MCF 10A (cell line): ENCODE measurements at regions of chr9 and their contacts with region 1.

Region 1: DNA sequence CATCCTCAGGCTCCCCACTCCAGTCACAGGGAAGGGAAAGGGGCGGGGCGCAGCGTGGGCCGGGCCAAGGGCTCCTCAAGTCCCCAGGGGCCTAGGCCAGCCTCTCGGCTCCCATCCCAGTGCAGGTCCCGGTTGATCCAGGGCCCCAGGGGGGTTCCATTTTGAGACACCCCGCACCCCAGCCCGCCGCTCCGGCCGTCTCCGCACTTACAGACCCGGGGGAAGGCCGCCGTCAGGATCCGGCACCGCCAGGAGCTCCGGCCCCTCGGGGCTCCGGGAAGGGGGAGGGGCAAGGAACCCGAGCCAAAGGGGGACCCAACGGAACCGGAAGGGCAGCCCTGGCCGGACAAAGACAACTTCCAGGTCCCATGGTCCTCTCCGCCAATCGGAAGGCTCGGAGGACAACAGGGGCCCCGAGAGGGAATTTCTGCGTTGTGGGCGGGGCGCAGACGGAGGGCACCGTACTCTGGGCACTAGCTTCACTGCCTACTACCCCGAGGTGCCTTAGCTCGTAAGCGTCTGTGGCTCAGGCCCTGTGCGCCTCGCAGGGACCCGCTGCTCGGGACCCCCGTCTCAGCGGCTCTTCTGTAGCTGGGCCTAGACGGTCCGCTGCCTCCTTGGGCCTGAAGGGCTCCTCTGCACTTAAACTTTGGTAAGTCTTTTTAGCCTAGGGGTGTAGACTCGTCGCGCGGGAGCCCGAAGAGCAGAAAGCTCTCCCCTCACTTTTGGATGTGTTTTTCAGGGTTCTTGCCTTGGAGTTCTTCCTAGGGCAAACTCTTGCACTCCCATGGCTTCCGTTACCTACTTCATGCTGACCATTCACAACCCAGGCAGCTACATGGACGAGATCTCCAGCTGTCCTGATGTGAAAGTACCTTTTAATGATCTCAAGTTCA is at the start of gene ZBTB26:
- DNase-seq: peak; percentile 97
- H3K4me3 Mint-ChIP-seq: no peak within 1 kb of the TSS
- H3K27ac Mint-ChIP-seq: no peak within 1 kb of the TSS
- H3K4me1 Mint-ChIP-seq: peaks cover 5% of the 10 kb centered on the region
- H3K27me3 Mint-ChIP-seq: no peaks in the 10 kb centered on the region
- CTCF ChIP-seq: no peak
- total RNA-seq, gene ZBTB26: 4.0 and 5.7 TPM in 2 replicates

Region 2: GRCh38 chr9:122827761-122828093 is 103.7 kb before region 1 on chr9:
- CTCF ChIA-PET with region 1: no interaction called
- POLR2A ChIA-PET with region 1: interaction called, 10 read pairs
- intact Hi-C with region 1: no loop called
- DNase-seq: no peak
- H3K4me3 Mint-ChIP-seq: peak overlapping the region; percentile 83
- H3K27ac Mint-ChIP-seq: peak overlapping the region; percentile 81
- H3K4me1 Mint-ChIP-seq: peaks cover 10% of the 10 kb centered on the region
- H3K27me3 Mint-ChIP-seq: no peaks in the 10 kb centered on the region
- CTCF ChIP-seq: no peak

Region 3: DNA sequence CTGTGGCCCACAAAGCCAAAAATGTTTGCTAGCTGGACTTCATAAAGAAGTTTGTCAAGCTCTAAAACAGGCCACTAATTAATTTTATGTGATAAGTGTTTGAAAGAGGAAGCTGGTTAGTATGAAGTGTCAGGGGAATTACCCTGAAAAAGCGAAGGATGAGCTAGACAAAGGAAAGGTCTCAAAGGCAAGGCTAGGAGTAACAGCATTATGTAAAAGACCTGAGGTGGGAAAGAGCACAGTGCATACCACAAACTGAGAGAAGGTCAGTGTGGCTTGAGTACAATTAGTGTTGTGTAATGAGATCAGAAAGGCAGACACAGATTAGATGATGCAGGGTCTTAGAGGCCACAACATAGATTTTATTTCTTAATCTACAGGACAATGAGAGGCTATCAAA is 56.0 kb before region 1 on chr9:
- CTCF ChIA-PET with region 1: no interaction called
- POLR2A ChIA-PET with region 1: no interaction called
- intact Hi-C with region 1: no loop called
- DNase-seq: no peak
- H3K4me3 Mint-ChIP-seq: no peak overlapping the region
- H3K27ac Mint-ChIP-seq: peak overlapping the region; percentile 10
- H3K4me1 Mint-ChIP-seq: no peaks in the 10 kb centered on the region
- H3K27me3 Mint-ChIP-seq: no peaks in the 10 kb centered on the region
- CTCF ChIP-seq: no peak

Region 4: DNA sequence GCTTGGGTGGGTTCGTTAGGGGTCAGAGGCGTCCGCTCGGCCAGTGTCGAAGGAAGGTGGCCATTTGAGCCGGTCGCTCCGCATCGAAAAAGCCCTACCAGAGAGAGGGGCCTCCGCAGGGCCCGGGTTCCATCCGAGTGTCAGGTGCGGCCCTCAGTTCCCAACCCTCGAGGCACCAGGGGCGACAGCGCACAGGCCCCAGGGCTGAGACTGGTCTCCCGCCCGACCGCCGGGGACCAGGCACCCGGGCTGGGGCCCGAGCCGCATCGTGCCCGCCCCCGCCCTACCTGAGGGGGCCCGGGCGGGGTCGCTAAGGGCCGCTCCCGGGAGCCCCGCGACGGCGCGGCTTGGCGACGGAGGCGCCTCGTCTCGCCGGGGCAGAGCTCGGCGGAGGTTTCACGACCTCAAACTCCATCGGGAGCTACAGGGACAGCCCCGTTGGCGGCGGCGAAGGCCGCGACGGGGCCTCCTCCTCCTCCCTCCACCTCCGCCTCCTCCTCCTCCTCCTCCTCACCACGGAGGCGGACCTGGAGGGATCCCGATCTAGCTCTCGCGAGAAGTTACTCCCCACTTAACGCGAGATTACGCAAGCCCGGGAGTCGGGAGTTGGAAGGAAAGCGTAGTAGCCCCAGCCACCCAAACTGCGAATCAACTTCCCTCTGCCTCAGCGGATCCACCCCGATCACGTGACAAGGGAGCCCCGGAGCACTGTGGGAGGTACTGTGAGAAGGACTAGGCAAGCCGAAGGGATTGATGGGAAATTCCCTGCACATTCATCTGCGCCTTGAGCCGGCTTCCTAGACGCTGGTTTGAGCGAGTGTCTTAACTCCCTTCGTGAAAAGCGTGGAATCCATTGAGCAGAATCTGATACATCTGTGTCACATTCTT is 26.4 kb before region 1 on chr9 and contains the start of gene RC3H2:
- CTCF ChIA-PET with region 1: interaction called, 3 read pairs
- POLR2A ChIA-PET with region 1: interaction called, 159 read pairs
- intact Hi-C with region 1: loop called (anchors 2 kb)
- DNase-seq: peak; percentile 100
- H3K4me3 Mint-ChIP-seq: peak within 1 kb of the TSS; percentile 89
- H3K27ac Mint-ChIP-seq: peak within 1 kb of the TSS; percentile 92
- H3K4me1 Mint-ChIP-seq: peaks cover 9% of the 10 kb centered on the region
- H3K27me3 Mint-ChIP-seq: no peaks in the 10 kb centered on the region
- CTCF ChIP-seq: no peak
- total RNA-seq, gene RC3H2: 52.4 and 59.1 TPM in 2 replicates

Region 5: GRCh38 chr9:122912964-122913673 is 18.4 kb before region 1 on chr9 and contains the start of gene ZBTB6:
- CTCF ChIA-PET with region 1: interaction called, 5 read pairs
- POLR2A ChIA-PET with region 1: interaction called, 159 read pairs
- intact Hi-C with region 1: no loop called
- DNase-seq: peak; percentile 89
- H3K4me3 Mint-ChIP-seq: peak within 1 kb of the TSS; percentile 97
- H3K27ac Mint-ChIP-seq: peak within 1 kb of the TSS; percentile 94
- H3K4me1 Mint-ChIP-seq: peaks cover 17% of the 10 kb centered on the region
- H3K27me3 Mint-ChIP-seq: no peaks in the 10 kb centered on the region
- CTCF ChIP-seq: no peak
- total RNA-seq, gene ZBTB6: 8.5 and 10.4 TPM in 2 replicates

Region 6: DNA sequence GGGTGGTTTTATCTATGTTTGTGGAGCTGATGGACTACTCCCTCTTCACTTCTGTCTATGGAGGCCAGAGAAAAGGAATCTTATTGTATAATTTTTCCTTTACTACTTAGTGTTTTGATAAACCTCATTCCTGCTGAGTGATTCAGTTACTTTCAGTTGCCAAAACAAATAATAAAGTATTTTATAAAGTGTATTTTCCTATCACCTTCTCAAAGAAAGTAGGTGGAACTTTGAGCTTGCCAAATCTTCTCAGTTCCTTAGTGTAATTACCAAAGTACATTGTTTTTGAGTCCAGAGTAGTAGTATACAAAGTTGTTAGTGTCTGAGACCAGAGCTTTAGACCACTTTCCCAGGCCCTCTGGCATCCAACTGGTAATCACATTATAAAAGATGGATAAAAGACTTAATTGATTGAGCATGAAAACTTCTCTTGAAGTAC is 22.8 kb after region 1 on chr9:
- CTCF ChIA-PET with region 1: interaction called, 3 read pairs
- POLR2A ChIA-PET with region 1: interaction called, 22 read pairs
- intact Hi-C with region 1: no loop called
- DNase-seq: peak; percentile 44
- H3K4me3 Mint-ChIP-seq: peak overlapping the region; percentile 33
- H3K27ac Mint-ChIP-seq: peak overlapping the region; percentile 76
- H3K4me1 Mint-ChIP-seq: peaks cover 30% of the 10 kb centered on the region
- H3K27me3 Mint-ChIP-seq: no peaks in the 10 kb centered on the region
- CTCF ChIP-seq: no peak

Region 7: DNA sequence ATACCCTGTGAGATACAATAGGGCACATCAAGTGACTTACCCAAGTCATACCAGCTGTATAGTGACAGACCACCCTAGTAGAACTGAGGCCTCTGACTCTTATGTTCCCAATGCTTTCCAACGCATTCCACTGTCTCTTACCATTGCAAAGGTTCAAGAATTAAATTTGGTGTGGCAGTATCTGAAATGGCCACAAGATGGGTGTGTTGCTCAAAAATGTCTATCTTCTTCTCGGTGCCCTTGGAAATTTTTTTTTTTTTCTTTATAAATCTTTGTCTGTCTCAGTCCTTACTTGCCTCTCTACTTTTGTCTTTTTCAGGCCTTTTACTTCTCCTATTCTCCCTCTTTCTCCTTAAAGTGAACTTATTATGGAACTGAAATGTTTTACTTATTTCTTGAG is 150.3 kb after region 1 on chr9:
- CTCF ChIA-PET with region 1: no interaction called
- POLR2A ChIA-PET with region 1: no interaction called
- intact Hi-C with region 1: no loop called
- DNase-seq: peak; percentile 50
- H3K4me3 Mint-ChIP-seq: no peak overlapping the region
- H3K27ac Mint-ChIP-seq: peak overlapping the region; percentile 13
- H3K4me1 Mint-ChIP-seq: no peaks in the 10 kb centered on the region
- H3K27me3 Mint-ChIP-seq: no peaks in the 10 kb centered on the region
- CTCF ChIP-seq: peak; percentile 46